ENCODE measurements at regions of chr5 and their contacts with region 1.

Region 1: GRCh38 chr5:135343413-135343812 is 55.6 kb downstream of the MACROH2A1 start:
- DNase-seq: no peak

Region 2: DNA sequence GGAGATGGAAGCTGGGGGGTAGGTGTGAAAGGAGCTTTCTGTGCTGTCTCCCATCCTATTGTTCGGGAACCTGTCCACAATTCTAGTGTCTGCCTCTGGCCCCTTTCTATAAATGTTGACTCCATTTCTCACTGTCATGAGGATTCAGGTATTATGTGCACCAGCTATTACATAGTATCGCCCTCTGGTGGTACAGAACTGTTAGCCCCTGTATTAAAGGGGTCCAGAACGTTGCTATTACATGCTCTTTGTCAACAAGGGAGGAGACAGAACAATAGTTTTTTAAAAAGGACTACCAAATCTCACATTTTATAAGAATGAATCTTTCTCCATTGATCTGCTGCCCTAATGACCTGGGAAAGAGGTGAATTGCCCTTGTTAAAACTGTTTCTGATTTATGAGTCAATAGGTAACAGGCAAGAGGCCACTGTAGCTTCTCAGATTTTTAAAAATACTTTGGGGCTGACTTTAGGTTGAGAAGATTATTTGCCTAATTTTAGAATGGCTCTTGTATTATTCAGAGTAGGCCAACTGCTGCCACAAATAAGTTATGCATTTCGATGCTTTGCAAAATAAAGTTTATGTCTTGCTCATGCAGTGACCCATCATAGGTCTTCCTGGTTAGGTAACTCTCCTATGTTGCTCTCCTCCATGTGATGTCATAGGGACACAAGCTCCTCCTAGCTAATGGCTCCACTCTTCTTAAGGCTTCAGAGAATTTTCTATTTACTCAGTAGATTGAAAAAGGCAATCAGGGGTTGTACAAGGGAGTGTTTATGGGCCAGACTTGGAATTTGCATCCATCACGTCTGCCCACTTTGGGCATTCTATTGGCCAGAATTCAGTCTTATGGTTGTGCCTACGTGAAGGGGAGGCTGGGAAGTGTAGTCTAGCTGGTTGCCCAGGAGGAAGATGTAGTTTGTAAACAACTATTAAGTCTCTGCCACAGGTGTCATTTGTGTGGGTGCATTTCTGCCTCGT is 83.0 kb after region 1 on chr5:
- intact Hi-C with region 1: loop called (anchors 5 kb)
- DNase-seq: no peak